HCT116 (cell line): ENCODE measurements at regions of chr6 and their contacts with region 1.

Region 1: DNA sequence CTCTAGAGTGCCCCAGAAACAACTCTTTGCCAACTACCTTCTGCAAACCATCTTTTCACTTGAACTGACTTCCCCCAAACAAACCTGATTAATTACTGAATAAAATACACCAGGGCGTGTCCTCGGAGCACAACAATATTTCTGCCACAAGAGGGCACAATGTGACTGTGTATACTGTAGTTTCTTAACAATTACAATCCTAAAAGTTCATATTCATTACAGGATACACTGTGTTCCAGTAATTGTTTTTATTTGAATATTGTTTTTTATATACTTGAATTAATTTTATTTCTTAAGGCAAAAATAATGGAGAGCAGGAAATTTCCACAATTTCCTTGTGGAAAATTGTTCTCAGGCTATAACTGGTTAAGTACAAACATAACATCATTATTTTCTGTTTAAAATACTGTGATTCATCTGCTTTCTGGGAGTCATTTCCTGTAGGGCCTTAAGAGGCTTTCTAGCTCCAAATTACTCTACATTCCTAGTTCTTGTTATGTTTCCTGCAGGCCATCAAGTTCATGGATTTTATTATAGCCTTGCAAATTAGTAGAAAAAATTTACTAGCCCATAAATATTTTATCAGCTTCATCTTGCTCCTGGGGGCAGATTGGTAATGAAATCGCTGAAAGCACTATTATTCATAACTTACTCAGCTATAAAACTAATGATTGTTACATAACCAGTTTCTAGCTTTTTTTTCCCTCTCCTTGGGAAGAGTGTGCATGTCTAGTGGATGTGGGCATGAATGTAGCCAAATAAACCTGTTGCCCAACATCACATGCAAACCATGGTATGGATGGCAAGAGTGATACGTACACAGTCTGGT is 51.9 kb upstream of the SLC22A16 start:
- DNase-seq: peak; percentile 56
- ATAC-seq: peak; percentile 82
- H3K4me3 ChIP-seq: no peak overlapping the region
- H3K27ac ChIP-seq: no peak overlapping the region
- H3K4me1 ChIP-seq: peaks cover 0 to 28% of the 10 kb centered on the region in 2 experiments; a peak in 2 of 4 replicates
- H3K27me3 ChIP-seq: no peaks in the 10 kb centered on the region
- CTCF ChIP-seq: peak; percentile 62 to 87 (median 76)
- POLR2A ChIP-seq: no peak
- RAD21 ChIP-seq: peak; percentile 95

Region 2: DNA sequence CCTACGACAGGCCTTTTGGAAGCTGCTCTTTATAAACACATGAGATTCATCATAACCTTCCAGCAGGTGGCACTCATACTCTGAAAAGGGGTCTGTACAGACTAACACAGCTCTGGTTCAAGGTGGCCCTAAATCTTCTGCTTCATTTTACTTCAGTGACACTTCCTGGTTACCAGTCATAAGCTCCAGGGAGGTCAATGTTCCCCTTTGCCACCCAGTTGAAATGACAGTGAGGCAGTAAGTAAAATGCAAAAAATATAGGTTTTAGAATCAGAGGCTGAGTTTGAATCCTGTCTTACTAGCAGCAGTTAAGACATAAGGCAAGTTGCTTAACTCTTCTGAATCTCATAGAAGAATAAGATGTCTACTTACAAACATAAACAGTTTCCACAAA is 154.1 kb after region 1 on chr6:
- CTCF ChIA-PET with region 1: interaction called, 9 read pairs
- POLR2A ChIA-PET with region 1: no interaction called
- RAD21 ChIA-PET with region 1: no interaction called
- intact Hi-C with region 1: loop called (anchors 5 kb)
- DNase-seq: peak; percentile 77
- ATAC-seq: peak; percentile 99
- H3K4me3 ChIP-seq: no peak overlapping the region
- H3K27ac ChIP-seq: no peak overlapping the region
- H3K4me1 ChIP-seq: peaks cover 2 to 6% of the 10 kb centered on the region in 2 experiments; a peak in 3 of 4 replicates
- H3K27me3 ChIP-seq: no peaks in the 10 kb centered on the region
- CTCF ChIP-seq: peak; percentile 59 to 88 (median 80)
- POLR2A ChIP-seq: no peak
- RAD21 ChIP-seq: peak; percentile 96

Region 3: GRCh38 chr6:110873981-110874879 is 345.9 kb after region 1 on chr6 and contains the start of gene AMD1:
- CTCF ChIA-PET with region 1: no interaction called
- POLR2A ChIA-PET with region 1: interaction called, 4 read pairs
- RAD21 ChIA-PET with region 1: no interaction called
- intact Hi-C with region 1: loop called (anchors 5 kb)
- DNase-seq: peak; percentile 92
- ATAC-seq: peak; percentile 88
- H3K4me3 ChIP-seq: peak within 1 kb of the TSS; percentile 66 to 86
- H3K27ac ChIP-seq: peak within 1 kb of the TSS; percentile 85
- H3K4me1 ChIP-seq: peaks cover 18 to 38% of the 10 kb centered on the region in 2 experiments
- H3K27me3 ChIP-seq: no peaks in the 10 kb centered on the region
- CTCF ChIP-seq: no peak
- POLR2A ChIP-seq: peak; percentile 99
- RAD21 ChIP-seq: no peak
- total RNA-seq, gene AMD1: 71.4 TPM

Region 4: DNA sequence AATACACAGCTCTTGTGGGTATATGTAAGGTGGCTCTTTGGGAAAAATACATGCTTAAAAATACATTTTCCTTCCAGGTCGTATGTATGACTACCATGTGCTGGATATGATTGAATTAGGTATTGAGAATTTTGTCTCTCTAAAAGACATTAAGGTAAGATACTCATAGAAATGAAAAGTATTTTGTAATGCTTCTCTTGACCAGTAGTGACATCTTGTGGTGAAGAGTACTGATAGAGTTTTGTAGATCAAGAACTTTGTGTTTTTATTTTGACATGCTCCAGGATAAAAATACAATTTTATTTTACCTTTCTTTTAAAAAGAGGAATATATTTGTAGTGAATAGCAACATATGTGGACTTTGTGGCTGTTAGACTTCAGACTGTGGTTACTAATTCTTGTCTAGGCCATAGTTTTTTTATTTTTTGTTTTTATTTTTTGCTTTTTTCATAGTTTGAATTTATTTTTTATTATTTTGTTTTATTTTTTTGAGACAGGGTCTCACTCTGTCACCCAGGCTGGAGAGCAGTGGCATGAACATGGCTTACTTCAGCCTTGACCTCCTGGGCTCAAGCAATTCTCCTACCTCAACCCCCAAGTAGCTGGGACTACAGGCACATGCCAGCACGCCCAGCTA is 471.4 kb after region 1 on chr6:
- CTCF ChIA-PET with region 1: interaction called, 6 read pairs
- POLR2A ChIA-PET with region 1: no interaction called
- RAD21 ChIA-PET with region 1: no interaction called
- intact Hi-C with region 1: loop called (anchors 2 kb)
- DNase-seq: no peak
- ATAC-seq: peak; percentile 36; the same call in 1 of the 2 replicates
- H3K4me3 ChIP-seq: no peak overlapping the region
- H3K27ac ChIP-seq: no peak overlapping the region
- H3K4me1 ChIP-seq: no peaks in the 10 kb centered on the region
- H3K27me3 ChIP-seq: no peaks in the 10 kb centered on the region
- CTCF ChIP-seq: peak in 2 of 3 experiments; percentile 51 to 57; a peak in 2 of 6 replicates
- POLR2A ChIP-seq: no peak
- RAD21 ChIP-seq: peak; percentile 67

Region 5: DNA sequence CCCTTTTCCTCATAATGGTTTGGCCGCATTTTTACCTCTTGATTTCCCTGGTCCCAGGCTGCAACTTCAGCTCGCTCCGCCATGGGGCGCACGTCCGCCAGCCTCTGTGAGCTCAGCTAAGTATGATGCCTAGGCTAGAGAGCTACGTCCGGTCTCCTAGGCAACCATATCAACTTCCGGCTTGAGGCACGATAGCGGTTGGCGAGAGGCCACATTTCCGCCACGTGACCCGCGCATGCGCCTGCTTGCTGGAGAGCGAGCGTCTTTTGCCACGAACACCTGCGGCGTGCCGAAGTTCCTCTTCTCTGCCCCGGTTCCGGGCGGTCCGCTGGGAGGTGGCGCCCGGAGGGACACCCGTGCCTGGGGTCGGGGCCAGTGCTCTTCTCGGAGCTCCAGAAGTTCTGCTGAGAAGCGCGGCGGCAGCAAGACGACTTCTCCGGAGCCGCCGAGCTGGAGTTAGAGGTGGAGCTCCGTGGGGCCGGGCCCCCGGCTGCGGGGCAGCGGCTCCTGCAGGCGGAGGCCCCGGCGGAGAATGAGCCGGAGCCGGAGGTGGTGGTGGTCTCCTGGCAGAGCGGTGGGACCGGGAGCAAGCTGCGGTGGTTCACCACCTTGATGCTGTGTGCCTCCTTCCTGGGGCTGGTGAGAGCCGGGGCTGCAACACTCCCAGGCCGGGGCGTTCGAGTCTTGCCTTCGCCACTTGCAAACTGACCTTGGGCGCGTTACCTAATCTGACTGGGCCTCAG is 730.9 kb after region 1 on chr6:
- CTCF ChIA-PET with region 1: interaction called, 5 read pairs
- POLR2A ChIA-PET with region 1: no interaction called
- RAD21 ChIA-PET with region 1: no interaction called
- intact Hi-C with region 1: loop called (anchors 2 kb)
- DNase-seq: peak; percentile 98
- ATAC-seq: peak; percentile 96
- H3K4me3 ChIP-seq: peak overlapping the region; percentile 72 to 82
- H3K27ac ChIP-seq: peak overlapping the region; percentile 61
- H3K4me1 ChIP-seq: peaks cover 14 to 43% of the 10 kb centered on the region in 2 experiments
- H3K27me3 ChIP-seq: no peaks in the 10 kb centered on the region
- CTCF ChIP-seq: peak; percentile 91 to 96 (median 93)
- POLR2A ChIP-seq: peak; percentile 74
- RAD21 ChIP-seq: peak; percentile 97